ENCODE measurements at regions of chr20 and their contacts with region 1.

Region 1: GRCh38 chr20:7207186-7207798 is 439.8 kb downstream of the BMP2 start:
- DNase-seq: no peak
- ATAC-seq: no peak
- H3K4me3 ChIP-seq: no peak overlapping the region
- H3K27ac ChIP-seq: no peak overlapping the region
- H3K4me1 ChIP-seq: peaks cover 0 to 4% of the 10 kb centered on the region in 2 donors
- H3K27me3 ChIP-seq: no peaks in the 10 kb centered on the region
- CTCF ChIP-seq: no peak
- POLR2A ChIP-seq: no peak

Region 2: DNA sequence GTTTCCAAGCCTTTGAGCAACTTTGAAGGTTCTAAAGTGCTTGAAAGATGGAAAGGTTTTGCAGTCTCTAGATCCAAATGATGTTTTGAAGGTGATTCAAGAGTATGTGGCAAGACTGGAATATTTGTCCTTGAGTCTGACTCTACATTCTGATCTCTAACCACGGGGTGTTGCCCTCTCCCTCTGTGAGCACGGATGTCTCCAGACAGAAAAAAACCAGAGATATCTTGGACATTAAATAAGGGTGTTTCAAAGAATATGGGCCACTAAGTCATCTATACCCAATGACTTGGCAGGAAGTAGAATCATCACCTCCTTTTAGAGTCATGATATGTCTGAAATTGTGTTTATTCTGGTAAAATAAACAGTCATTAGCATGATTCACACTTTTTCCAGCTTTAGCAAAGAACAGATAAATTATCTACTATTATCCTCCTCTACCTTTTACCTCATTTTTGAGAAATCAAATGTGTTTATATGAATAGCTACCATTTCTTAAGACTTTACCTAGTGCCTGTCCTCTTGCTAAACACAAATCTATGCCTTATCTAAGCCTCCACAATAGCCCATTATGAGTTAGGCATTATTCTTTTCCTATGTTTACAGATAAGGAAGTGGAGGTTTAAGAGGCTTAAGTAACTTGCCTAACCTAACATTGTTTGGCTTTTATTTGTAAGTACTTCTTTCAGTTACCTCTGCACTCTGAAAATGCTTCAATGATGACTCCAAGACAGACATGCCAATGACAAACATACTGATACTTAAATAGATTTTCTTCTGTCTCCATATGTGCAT is 55.4 kb before region 1 on chr20:
- in situ Hi-C with region 1: loop called in 1 of 4 experiments (anchors 10 kb)
- intact Hi-C with region 1: no loop called
- DNase-seq: no peak
- ATAC-seq: no peak
- H3K4me3 ChIP-seq: no peak overlapping the region
- H3K27ac ChIP-seq: no peak overlapping the region
- H3K4me1 ChIP-seq: no peaks in the 10 kb centered on the region
- H3K27me3 ChIP-seq: no peaks in the 10 kb centered on the region
- CTCF ChIP-seq: no peak
- POLR2A ChIP-seq: no peak